Aorta (tissue), 5 donors: ENCODE measurements at regions of chr6 and their contacts with region 1.

Region 1: DNA sequence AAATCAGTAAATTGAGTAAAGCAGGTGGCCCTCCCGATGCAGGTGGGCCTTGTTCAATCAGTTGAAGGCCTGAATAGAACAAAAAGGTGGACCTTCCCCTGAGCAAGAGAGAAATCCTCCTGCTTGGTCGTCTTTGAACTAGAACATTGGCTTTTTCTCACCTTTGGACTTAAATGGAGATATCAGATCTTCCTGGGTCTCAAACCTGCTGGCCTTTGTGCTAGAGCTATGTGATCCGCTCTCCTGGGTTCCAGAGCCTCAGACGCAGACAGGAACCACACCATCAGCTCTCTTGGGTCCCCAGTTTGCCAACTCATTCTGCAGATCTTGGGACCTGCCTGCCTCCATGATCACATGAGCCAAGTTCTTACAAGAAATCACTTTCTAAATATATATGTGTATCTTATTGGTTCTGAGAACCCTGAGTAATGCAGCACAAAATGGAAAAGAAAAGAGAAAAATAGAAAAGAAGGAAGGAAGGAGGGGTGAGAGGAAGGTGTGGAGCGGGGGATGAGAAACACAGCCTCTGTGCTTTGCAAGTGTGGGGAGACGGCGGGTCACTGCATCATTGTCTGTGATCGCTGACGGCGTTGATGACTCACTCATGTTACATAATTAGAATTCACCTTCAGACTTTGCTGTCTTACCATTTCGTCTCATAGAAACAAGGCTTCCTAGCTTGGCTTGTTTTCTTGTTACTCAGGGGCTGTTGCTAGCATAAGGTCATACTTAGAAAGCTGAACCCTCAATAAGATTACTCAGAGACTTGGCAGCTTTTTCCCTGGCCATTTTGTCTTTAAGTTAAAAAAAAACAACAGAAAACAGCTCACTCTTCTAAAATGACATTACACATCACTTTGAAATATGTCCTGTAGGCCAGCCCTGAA is 85.7 kb upstream of the NEDD9 start:
- DNase-seq: peak; percentile 81 to 86
- ATAC-seq: peak; percentile 85
- H3K4me3 ChIP-seq: no peak overlapping the region
- H3K27ac ChIP-seq: peak overlapping the region; percentile 18 to 96
- H3K4me1 ChIP-seq: peaks cover 0 to 5% of the 10 kb centered on the region in 2 donors
- H3K27me3 ChIP-seq: no peaks in the 10 kb centered on the region

Region 2: DNA sequence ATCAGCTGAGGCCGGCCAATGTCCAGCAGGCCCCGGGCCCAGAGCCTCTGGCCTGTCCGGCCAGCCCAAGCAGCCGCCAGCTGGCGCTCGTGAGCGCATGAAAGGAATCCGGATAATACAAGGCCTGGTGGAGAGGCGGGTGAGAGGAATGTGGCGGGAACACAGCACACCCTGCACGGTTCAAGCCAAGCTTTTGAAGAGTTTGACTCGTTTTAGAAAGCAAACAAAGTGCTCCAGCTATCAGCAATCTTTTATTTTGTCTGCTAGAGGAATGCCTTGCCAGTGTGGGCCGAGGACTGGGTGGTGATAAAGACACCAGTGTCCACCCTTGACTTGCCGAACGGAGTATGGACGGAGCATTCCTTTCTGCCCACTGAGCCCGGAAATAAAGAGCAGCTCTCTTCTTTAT is 76.3 kb before region 1 on chr6:
- intact Hi-C with region 1: loop called in 1 of 2 experiments (anchors 5 kb)
- DNase-seq: peak; percentile 87 to 94
- ATAC-seq: peak; percentile 94
- H3K4me3 ChIP-seq: no peak overlapping the region
- H3K27ac ChIP-seq: peak overlapping the region in 1 of 2 donors; percentile 87
- H3K4me1 ChIP-seq: peaks cover 2 to 8% of the 10 kb centered on the region in 2 donors
- H3K27me3 ChIP-seq: no peaks in the 10 kb centered on the region

Region 3: DNA sequence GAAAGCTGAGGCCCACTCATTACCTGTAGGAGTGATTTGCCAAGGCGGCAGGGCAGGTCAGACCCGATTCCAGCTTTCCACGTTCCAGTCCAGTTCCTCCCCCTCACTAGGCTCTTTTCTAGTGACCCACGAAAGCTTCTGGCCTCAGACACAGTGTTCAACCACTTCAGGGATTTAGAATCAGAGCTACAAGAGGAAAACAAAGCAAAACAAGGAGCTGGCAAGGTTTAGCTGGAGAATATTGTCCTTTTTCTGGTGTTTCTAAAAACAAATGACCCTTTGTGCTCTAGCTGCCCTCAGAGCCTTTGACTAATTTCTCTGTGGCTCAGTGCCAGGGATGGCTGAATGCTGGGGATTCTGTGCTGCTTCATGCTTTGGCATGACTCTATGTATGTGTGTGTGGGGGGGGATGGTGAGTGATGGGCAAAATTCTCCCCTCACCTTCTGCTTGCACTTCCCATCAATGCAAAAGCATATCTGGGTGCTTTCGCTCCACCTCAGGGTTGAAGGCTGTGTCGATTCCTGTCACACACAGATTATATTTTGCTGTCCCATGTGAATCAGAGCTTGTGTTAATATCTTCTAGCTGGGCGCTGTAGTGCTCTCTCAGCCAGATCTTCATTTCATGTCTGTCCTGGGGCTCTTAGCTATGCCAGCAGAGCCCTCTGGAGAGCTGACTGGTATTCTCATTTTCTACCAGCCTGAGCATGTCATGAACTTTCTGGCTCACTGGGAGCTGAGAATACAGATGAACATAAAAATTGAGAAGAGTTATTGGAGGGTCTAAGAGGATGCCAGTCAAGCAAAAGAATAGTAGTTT is 66.4 kb before region 1 on chr6:
- intact Hi-C with region 1: loop called in 1 of 2 experiments (anchors 5 kb)
- DNase-seq: peak; percentile 76 to 80
- ATAC-seq: peak; percentile 89
- H3K4me3 ChIP-seq: no peak overlapping the region
- H3K27ac ChIP-seq: peak overlapping the region; percentile 18 to 97
- H3K4me1 ChIP-seq: peaks cover 4 to 7% of the 10 kb centered on the region in 2 donors
- H3K27me3 ChIP-seq: no peaks in the 10 kb centered on the region

Region 4: DNA sequence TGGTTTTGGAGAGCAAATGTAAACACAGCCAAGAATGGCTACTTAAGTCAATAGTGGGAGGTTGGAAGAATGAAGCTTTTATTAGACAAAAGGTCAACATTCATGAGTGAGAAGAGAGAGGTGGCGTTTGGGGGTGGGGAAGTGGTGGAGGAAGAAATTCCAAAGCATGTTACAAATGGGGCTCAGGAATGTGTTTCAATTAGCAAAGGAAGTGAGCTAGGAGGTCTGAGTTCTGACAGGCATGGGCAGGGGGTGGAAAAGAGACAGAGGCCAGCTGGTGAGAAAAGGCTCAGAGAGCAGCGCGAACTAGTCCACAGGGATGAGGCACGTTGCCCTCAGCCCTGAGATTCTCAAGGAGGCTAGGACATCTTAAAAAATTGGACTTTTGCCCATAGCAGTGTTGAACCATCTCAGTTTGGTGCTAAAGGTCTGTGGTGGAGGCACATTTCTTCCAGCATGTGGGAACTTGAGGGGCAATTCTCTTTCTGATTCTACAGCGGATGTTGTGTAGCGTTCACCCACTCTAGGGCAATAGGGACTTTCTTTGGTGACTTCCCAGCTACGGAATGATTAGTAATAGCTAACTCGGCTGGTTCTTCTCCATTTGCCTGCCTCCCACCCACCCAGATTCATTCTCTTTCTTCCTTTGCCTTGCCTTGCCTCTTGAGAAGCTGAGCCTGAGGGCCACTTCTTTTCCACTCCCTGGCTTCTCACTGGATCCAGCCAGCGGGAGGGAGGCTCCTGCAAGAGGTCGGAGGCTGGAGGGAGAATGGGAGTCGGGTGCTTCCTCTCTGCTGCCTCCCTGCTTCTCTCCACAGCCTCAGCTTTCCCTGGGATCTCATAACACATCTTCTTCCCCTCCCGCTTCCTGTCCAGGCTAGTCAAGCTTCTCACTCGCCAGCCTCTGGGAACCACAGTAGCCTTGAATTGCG is 40.6 kb before region 1 on chr6:
- intact Hi-C with region 1: loop called (anchors 5 kb)
- DNase-seq: no peak
- ATAC-seq: no peak
- H3K4me3 ChIP-seq: no peak overlapping the region
- H3K27ac ChIP-seq: peak overlapping the region in 1 of 2 donors; percentile 60
- H3K4me1 ChIP-seq: peaks cover 0 to 2% of the 10 kb centered on the region in 2 donors
- H3K27me3 ChIP-seq: no peaks in the 10 kb centered on the region

Region 5: GRCh38 chr6:11353921-11354389 is 35.8 kb after region 1 on chr6:
- intact Hi-C with region 1: loop called in 1 of 2 experiments (anchors 1 kb)
- DNase-seq: peak; percentile 79 to 85
- ATAC-seq: peak; percentile 85
- H3K4me3 ChIP-seq: no peak overlapping the region
- H3K27ac ChIP-seq: peak overlapping the region; percentile 90 to 98
- H3K4me1 ChIP-seq: peaks cover 0 to 2% of the 10 kb centered on the region in 2 donors
- H3K27me3 ChIP-seq: no peaks in the 10 kb centered on the region

Region 6: GRCh38 chr6:11414176-11414963 is 96.2 kb after region 1 on chr6:
- intact Hi-C with region 1: loop called (anchors 5 kb)
- DNase-seq: no peak
- ATAC-seq: no peak
- H3K4me3 ChIP-seq: no peak overlapping the region
- H3K27ac ChIP-seq: peak overlapping the region; percentile 12 to 63
- H3K4me1 ChIP-seq: peaks cover 3 to 4% of the 10 kb centered on the region in 2 donors
- H3K27me3 ChIP-seq: no peaks in the 10 kb centered on the region